ENCODE measurements at regions of chr1 and their contacts with region 1.

Region 1: GRCh38 chr1:224329842-224330753 is at the start of gene NVL:
- DNase-seq: peak; percentile 33
- H3K4me3 ChIP-seq: peak within 1 kb of the TSS; percentile 99
- CTCF ChIP-seq: no peak

Region 2: DNA sequence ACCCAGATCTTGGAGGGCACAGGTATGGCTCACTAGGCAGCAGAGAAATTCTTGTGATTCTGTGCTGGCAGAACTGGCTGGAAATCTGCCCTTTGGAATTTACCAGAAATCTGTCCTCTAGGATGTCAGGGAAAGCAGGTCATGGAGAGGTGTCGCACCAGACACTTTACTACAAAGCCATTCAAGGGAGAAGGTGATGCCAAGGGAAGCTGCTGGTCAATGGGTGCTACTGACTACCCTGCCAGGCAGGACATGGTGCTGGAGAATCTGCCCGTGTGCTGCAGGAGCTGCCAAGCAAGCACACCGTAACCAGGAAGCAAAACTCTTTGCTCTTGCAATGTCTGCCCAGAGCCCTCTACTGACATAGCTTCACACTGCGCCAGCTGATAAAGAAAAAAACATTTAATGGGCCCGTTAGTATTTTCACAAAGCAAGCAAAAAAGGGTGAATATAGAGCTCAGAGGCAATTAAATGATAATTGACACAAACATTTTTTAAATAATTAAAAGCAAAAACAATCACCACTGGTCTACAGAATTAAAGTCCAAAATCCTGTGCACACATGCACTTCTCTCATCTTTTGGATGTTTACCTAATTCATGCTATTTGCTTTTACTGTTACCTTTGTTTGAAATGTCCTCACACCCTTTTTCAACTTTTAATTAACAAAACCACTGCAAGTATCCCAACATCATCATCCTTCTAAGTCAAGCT is 223.4 kb before region 1 on chr1:
- CTCF ChIA-PET with region 1: interaction called, 10 read pairs
- POLR2A ChIA-PET with region 1: no interaction called
- DNase-seq: no peak
- H3K4me3 ChIP-seq: no peak overlapping the region
- CTCF ChIP-seq: peak; percentile 39

Region 3: DNA sequence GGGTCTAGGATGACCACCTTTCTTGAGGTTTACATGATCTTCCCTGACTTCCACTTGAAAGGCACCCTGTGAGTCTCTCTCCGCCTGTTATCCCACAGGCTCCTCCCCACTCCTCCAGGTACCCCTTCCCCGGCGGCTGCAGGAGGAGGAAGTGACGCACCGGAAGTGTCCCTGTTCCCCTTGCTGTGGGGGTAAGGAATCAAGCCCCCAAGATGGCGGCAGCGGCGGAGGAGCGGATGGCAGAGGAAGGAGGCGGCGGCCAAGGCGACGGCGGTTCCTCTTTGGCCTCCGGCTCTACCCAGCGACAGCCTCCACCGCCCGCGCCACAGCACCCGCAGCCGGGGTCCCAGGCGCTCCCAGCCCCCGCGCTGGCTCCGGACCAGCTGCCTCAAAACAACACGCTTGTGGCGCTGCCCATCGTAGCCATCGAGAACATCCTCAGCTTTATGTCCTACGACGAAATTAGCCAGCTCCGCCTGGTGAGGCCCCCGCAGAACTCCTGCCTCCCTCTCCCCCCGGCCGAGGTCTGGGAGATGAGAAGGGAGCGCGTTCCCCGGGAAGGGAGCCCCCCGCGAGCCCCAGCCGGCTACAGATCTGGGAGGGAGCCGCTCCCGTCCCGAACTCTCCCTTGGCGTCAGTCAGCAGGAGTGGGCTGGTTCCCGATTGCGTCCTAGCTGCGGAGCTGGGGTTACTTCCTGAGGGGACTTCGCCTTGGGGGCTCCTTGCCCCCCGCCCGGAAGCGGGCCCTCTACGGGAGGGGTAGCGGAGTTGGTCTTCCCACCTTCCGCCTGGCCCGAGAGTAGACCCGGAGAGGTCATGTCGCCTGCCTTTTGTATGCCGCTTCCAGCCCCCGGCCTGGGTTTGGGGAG is 215.9 kb before region 1 on chr1 and contains the start of gene FBXO28:
- CTCF ChIA-PET with region 1: interaction called, 84 read pairs
- POLR2A ChIA-PET with region 1: no interaction called
- DNase-seq: peak; percentile 61
- H3K4me3 ChIP-seq: peak within 1 kb of the TSS; percentile 84
- CTCF ChIP-seq: no peak

Region 4: DNA sequence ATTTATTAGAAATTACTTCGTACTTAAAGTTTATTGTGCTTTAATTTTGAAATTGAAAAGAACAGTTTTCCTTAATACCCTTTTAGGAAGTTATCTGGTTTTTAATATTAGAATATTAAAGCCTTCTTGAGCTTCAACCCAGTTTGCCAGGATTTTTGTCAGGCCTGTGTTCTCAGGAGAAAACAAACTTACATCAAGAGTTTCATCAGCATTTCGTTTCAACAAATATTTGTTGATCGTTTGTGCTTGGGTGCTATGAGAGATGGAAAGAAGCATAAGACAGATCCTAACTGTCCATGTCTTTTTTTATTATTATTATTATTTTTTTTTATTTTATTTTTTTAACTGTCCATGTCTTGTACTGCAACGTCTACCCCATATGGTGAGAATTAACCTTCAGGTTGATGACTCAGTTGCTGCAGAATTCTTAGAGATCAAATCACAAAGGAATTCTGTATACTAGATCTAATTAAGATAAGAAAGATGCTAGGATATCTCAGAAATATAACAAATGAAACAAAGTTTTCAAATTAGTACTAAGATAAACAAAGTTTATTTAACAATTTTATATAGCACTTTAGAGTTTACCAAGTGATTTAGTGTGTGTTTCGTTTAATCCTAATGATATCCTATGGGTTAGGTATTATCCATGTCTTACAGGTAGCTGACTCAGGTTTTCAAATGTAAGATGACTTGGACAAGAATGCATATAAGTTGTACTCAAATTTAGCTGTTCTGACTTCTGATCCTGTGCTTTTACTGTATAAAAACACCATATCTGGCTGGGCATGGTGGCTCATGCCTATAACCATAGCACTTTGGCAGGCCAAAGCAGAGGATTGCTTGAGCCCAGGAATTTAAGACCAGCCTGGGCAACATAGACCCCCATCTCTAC is 201.9 kb before region 1 on chr1:
- CTCF ChIA-PET with region 1: interaction called, 15 read pairs
- POLR2A ChIA-PET with region 1: no interaction called
- DNase-seq: no peak
- H3K4me3 ChIP-seq: no peak overlapping the region
- CTCF ChIP-seq: no peak

Region 5: DNA sequence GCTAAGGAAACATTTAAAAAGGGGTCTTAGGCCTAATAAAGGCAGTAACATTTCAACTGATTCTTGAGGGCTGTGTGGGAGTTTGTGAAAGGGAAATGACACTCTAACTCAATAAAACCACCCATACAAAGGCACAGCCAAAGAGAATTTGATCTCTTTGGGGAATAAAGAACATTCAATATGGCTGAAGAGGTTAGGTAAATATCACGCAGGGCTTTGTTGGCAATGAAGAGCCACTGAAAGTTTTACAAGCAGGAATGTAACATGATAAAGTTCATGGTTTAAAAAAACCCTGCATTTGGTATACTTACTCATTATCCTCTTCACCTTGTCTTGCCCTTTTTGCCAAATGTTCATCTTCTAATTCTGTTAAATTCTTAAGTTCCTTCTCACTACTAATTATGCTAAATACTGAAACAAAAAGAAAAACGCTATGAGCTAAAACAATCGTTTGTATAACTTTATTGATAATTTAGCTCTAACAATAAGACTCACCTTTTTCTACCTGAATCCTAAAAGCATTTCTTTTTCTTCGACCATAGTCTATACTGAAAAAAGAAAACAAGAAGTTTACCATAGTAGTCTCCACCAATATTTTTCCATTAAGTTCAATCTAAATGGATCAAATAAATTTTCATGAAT is 12.6 kb before region 1 on chr1:
- CTCF ChIA-PET with region 1: interaction called, 11 read pairs
- POLR2A ChIA-PET with region 1: interaction called, 4 read pairs
- DNase-seq: no peak
- H3K4me3 ChIP-seq: no peak overlapping the region
- CTCF ChIP-seq: no peak

Region 6: DNA sequence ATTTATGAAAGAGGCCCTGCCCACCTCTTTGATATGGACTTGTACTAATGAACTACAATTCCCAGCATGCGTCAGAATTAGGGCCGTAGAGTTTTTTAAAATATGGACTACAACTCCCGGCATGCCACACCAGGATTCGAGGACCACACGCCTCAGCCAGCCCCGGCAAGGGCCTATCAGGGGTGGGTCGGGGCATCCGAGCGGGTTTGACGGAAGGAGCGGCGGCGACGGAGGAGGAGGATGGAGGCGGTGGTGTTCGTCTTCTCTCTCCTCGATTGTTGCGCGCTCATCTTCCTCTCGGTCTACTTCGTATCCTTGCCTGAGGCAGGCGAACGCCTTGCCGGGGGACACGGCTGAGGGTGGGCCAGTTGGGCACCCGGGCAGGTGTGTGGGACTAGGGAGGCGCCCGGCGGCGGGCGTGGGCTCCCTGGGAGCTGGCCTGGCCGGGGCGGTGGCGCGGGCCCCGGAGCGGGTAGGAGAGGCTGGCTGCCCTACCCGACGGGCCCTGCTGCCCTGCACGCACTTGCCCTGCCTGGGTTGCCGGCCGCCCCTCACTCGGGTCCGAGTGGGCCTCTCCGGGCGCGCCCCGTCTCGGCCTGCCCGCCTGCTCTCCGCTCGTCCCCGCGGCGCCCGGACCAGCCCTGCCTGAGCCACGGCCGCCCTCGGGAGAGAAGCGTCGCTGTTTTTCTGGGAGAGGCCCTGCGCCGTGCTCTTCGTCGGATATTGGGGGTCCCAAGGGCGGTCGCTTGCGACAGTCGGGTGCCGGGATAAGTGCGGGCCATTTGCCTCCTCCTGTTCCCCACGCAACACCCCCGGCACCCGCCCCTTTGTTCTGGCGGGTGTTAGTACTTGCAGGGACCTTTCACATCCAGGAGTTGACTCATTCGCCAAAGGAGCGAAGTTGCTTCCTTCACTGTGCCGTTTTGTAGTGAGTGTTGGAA is 26.9 kb after region 1 on chr1 and contains the start of gene CNIH4:
- CTCF ChIA-PET with region 1: interaction called, 14 read pairs
- POLR2A ChIA-PET with region 1: interaction called, 3 read pairs
- DNase-seq: peak; percentile 79
- H3K4me3 ChIP-seq: peak within 1 kb of the TSS; percentile 89
- CTCF ChIP-seq: no peak

Region 7: GRCh38 chr1:224447251-224447650 is 117.2 kb after region 1 on chr1:
- CTCF ChIA-PET with region 1: no interaction called
- POLR2A ChIA-PET with region 1: no interaction called
- DNase-seq: no peak
- H3K4me3 ChIP-seq: no peak overlapping the region
- CTCF ChIP-seq: no peak

Region 8: DNA sequence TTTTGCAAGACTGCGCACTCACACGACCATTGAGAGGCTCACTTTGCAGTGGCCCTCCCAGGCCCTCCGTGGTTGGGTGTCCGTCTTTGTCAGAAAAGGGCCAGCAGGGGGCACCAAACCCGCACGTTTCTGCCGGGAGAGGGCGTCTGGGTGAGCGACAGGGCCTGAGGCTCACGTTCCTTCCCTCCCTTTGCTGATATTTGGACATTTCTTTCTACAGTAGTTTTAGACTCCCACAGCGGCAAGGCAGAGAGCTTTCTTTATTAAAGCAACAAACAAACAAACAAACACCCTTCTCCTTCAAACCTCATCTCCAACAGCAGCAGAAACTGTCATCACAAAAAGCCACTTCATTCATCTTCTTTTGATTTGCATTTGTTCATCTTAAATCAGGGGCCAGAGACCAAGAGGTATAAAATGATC is 183.7 kb after region 1 on chr1:
- CTCF ChIA-PET with region 1: no interaction called
- POLR2A ChIA-PET with region 1: no interaction called
- DNase-seq: no peak
- H3K4me3 ChIP-seq: no peak overlapping the region
- CTCF ChIP-seq: peak; percentile 97